ENCODE measurements at regions of chr19 and their contacts with region 1.

Region 1: DNA sequence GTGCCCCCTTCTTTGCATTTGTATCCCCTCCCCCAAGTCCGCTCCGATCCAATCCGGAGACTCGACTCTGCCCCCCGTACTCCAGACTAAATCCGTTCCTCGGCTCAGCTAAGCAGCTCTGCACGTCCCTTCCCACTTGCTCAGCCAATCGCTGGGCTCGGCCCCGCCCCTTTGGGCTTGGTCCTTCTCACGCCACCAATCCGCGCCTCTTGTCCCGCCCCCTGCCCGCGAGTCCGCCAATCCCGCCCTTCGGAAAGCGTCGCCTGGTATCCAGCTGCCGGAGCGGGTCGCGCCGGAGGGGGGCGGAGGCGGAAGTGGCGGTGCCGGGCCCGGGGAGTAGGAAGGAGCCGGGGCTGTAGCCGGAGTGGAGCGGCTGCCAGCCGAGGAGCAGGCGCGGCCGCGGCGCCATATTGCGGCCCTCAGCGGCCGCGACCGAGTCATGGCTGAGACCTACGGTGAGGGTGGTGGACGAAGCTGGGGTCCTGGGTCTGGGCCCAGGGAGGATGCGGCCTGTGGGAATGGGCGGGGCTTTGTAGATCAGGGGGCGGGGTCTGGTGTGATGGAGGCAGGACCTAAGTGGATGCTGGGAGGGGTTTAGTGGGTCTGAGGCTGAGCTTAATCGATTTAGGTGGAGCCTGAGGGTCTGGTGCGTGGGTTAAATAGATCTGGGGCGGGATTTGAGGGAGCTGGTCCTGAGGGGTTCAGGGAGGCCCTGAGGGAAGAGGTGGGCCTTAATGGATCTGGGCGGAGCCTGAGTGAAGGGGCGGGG is at the start of gene RAB4B:
- DNase-seq: peak; percentile 100
- H3K4me3 Mint-ChIP-seq: peak within 1 kb of the TSS; percentile 95
- H3K27ac Mint-ChIP-seq: peak within 1 kb of the TSS; percentile 99
- H3K4me1 Mint-ChIP-seq: peaks cover 36% of the 10 kb centered on the region
- H3K27me3 Mint-ChIP-seq: peaks cover 2% of the 10 kb centered on the region
- total RNA-seq, gene RAB4B: 65.7 to 68.3 TPM

Region 2: DNA sequence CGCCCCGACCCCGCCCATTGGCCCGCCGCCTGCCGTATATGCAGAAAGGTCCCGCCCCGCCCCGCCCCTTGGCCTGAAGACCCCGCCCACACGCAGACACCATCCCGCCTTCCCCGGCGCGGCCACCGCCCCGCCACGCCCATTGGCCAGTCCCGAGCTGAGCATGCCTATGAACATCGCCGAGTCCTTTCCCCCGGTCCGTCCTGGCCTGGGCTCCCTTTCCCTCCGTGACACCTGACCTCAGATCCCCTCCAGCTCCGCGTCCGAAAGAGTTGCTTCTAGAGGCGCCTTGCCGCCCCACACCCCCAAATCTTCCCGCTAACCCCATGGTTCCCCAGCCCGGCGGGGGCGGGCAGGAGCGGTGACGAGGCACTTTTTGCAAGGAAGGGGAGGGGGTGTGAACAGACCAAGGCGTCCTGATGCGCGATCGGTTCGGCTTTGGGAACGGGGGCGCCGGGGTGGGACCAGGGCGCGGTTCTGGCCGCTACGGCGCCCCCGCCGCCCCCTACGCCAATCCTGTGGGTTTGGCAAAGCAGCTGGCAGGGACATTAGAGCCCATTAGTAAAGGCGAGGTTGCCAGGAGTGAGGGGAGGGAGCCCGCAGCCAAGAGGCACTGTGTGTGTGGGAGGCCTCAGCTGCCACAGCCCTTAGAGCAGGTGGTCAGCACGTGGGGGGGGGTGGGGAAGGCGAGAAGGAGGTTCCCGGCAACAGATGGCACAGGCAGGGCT is 87.3 kb before region 1 on chr19:
- CTCF ChIA-PET with region 1: no interaction called
- POLR2A ChIA-PET with region 1: interaction called, 11 read pairs
- DNase-seq: peak; percentile 90
- H3K4me3 Mint-ChIP-seq: peak overlapping the region; percentile 78
- H3K27ac Mint-ChIP-seq: peak overlapping the region; percentile 56
- H3K4me1 Mint-ChIP-seq: peaks cover 2% of the 10 kb centered on the region
- H3K27me3 Mint-ChIP-seq: no peaks in the 10 kb centered on the region

Region 3: GRCh38 chr19:40750059-40750873 is 27.9 kb before region 1 on chr19 and contains the start of gene ACTMAP:
- CTCF ChIA-PET with region 1: interaction called, 48 read pairs
- POLR2A ChIA-PET with region 1: interaction called, 244 read pairs
- DNase-seq: peak; percentile 100
- H3K4me3 Mint-ChIP-seq: peak within 1 kb of the TSS; percentile 96
- H3K27ac Mint-ChIP-seq: peak within 1 kb of the TSS; percentile 99
- H3K4me1 Mint-ChIP-seq: peaks cover 43% of the 10 kb centered on the region
- H3K27me3 Mint-ChIP-seq: no peaks in the 10 kb centered on the region
- total RNA-seq, gene ACTMAP: 18.1 to 18.8 TPM

Region 4: GRCh38 chr19:40798223-40798996 is 20.3 kb after region 1 on chr19:
- CTCF ChIA-PET with region 1: interaction called, 41 read pairs
- POLR2A ChIA-PET with region 1: interaction called, 161 read pairs
- DNase-seq: peak; percentile 100
- H3K4me3 Mint-ChIP-seq: peak overlapping the region; percentile 78
- H3K27ac Mint-ChIP-seq: peak overlapping the region; percentile 84
- H3K4me1 Mint-ChIP-seq: peaks cover 55% of the 10 kb centered on the region
- H3K27me3 Mint-ChIP-seq: no peaks in the 10 kb centered on the region

Region 5: GRCh38 chr19:40982594-40983101 is 204.5 kb after region 1 on chr19:
- CTCF ChIA-PET with region 1: no interaction called
- POLR2A ChIA-PET with region 1: no interaction called
- DNase-seq: no peak
- H3K4me3 Mint-ChIP-seq: no peak overlapping the region
- H3K27ac Mint-ChIP-seq: no peak overlapping the region
- H3K4me1 Mint-ChIP-seq: peaks cover 2% of the 10 kb centered on the region
- H3K27me3 Mint-ChIP-seq: peaks cover 24% of the 10 kb centered on the region

Measured in activated CD4-positive, alpha-beta memory T cell treated with anti-CD3 and anti-CD28 coated beads, Interleukin-2, amount 10 ng/mL, durations not matched to agents 7 days and 5 days (primary cell).